H1 (cell line): ENCODE measurements at regions of chr18 and their contacts with region 1.

Region 1: DNA sequence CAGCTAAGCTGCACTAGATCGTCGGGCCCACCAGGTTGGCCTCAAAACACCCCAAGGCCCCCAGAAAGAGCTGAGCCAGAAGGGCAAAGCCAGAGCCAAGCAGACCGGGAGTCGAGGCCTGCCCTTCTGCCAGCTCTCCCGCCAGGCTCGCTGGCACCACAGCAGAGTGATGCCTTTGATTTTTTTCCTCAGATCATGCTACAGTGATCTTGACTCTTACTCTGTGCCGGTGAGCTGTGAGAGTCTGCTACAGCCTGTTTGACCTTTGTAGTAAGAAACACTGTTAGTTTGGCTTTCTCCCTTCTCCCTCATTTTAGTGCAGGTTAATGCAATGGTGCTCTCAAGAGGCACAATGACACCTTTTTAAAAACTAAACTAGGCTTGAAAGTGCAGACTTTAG is 97.8 kb downstream of the ESCO1 start:
- DNase-seq: peak in 1 of 2 experiments; percentile 19
- H3K4me3 ChIP-seq: no peak overlapping the region
- H3K27ac ChIP-seq: no peak overlapping the region
- H3K4me1 ChIP-seq: no peaks in the 10 kb centered on the region; a peak in 1 of 7 replicates
- H3K27me3 ChIP-seq: no peaks in the 10 kb centered on the region
- CTCF ChIP-seq: no peak
- EP300 ChIP-seq: no peak
- POLR2A ChIP-seq: no peak
- RAD21 ChIP-seq: no peak

Region 2: GRCh38 chr18:21242141-21242779 is 260.4 kb before region 1 on chr18 and contains the start of gene GREB1L:
- CTCF ChIA-PET with region 1: no interaction called
- POLR2A ChIA-PET with region 1: no interaction called
- DNase-seq: peak in 1 of 2 experiments; percentile 83
- H3K4me3 ChIP-seq: peak within 1 kb of the TSS; percentile 63 to 74 (median 69)
- H3K27ac ChIP-seq: no peak within 1 kb of the TSS
- H3K4me1 ChIP-seq: peaks cover 0 to 15% (median 8%) of the 10 kb centered on the region in 4 experiments; a peak in 6 of 7 replicates
- H3K27me3 ChIP-seq: peaks cover 35 to 64% (median 56%) of the 10 kb centered on the region in 4 experiments
- CTCF ChIP-seq: peak; percentile 14 to 54 (median 43)
- EP300 ChIP-seq: no peak
- POLR2A ChIP-seq: no peak
- RAD21 ChIP-seq: peak; percentile 43 to 70
- total RNA-seq, gene GREB1L: 0.31 and 0.34 TPM in 2 replicates

Region 3: DNA sequence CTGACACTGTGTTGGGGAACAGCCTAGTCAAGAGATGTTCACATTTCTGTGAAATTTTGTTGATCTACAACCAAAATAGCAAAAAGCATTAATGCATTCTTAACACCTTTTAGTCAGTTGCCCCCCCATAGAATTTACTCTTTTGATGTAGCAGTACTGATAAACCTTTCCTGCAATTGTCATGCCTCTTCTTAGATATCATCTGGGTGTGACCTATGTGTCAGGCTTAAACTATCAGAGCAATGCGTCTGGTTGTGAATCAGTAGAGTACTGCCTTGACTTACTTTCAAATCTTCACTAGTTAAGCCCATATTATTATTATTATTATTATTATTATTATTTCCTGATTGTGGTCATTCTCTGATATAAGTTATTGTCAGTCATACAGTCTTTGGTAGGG is 198.7 kb before region 1 on chr18:
- CTCF ChIA-PET with region 1: no interaction called
- POLR2A ChIA-PET with region 1: no interaction called
- DNase-seq: no peak
- H3K4me3 ChIP-seq: no peak overlapping the region
- H3K27ac ChIP-seq: no peak overlapping the region
- H3K4me1 ChIP-seq: peaks cover 0 to 11% (median 0%) of the 10 kb centered on the region in 4 experiments; a peak in 1 of 7 replicates
- H3K27me3 ChIP-seq: no peaks in the 10 kb centered on the region; a peak in 1 of 7 replicates
- CTCF ChIP-seq: no peak
- EP300 ChIP-seq: no peak
- POLR2A ChIP-seq: no peak
- RAD21 ChIP-seq: no peak

Region 4: DNA sequence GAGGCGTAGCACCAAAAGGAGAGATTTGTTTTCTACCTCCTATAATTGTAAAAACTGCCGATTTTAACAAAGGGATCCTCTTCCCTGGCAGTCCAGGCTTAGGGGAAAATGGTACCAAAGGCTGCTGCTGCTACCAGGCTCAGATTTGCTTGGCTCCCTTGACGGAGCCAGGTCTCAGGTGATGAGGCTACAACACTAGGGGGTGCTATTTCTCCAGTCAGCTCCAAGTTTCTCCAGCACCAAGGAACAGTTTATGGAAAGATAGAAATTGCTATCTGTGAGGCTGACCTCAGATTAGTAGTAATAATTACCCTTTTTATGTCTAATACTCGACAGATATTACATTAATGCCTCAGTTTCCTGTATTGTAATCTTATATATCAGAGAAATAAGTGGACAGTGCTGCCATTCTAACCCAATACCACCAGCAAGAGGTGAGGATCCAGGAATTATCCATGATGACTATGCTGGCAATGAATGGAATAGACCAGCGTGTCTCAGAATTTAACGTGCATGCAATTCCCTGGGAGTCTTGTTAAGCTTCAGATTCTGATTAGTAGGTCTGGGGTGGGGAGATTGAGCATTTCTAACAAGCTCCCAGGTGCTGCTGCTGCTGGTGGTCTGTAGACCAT is 13.4 kb before region 1 on chr18:
- CTCF ChIA-PET with region 1: interaction called, 32 read pairs
- POLR2A ChIA-PET with region 1: no interaction called
- DNase-seq: peak; percentile 29 to 66
- H3K4me3 ChIP-seq: no peak overlapping the region
- H3K27ac ChIP-seq: no peak overlapping the region
- H3K4me1 ChIP-seq: no peaks in the 10 kb centered on the region; a peak in 2 of 7 replicates
- H3K27me3 ChIP-seq: no peaks in the 10 kb centered on the region; a peak in 1 of 7 replicates
- CTCF ChIP-seq: peak; percentile 76 to 86 (median 77)
- EP300 ChIP-seq: no peak
- POLR2A ChIP-seq: no peak
- RAD21 ChIP-seq: peak; percentile 87 to 89